Posterior cingulate gyrus (tissue), 11 donors: ENCODE measurements at regions of chr11 and their contacts with region 1.

Region 1: DNA sequence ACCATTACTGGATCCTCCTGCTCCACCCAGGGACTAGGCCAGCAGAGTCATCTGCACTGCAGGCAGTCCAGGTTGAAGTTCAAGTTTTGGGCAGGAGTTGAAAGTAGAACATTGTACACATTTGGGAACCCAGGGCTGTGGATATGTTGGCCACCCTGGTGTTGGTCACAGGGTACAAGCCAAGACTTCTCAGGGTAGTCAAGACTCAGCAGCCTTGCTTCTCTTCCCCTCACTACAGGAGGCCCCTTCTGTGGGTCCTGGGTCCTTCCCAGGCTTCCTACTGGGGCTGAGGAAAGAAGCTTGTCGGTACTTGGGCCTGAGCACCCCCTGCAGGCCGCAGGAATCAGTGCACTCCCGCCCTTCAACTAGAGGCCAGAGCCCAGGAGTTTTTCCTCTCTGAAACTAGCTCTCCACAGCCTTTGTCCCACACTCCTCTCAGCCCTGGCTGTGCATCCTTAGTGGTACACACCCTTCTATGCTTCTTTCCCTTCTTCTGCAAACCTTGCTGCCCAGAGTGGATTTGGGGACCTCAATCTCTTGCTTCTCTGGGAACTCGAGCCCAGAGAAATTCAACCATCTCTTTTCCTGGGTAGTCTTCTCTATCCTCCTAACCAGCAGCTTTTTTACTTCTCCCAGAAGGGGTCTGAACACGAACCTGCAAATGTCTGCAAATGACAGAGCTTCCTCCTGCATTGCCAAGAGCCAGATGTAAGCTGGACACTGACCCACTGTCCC is 2.6 kb upstream of the HPX start:
- DNase-seq: peak; percentile 52 to 95 (median 72)

Region 2: GRCh38 chr11:6377902-6378639 is 65.4 kb before region 1 on chr11:
- intact Hi-C with region 1: loop called (anchors 1 kb)
- DNase-seq: no peak

Region 3: DNA sequence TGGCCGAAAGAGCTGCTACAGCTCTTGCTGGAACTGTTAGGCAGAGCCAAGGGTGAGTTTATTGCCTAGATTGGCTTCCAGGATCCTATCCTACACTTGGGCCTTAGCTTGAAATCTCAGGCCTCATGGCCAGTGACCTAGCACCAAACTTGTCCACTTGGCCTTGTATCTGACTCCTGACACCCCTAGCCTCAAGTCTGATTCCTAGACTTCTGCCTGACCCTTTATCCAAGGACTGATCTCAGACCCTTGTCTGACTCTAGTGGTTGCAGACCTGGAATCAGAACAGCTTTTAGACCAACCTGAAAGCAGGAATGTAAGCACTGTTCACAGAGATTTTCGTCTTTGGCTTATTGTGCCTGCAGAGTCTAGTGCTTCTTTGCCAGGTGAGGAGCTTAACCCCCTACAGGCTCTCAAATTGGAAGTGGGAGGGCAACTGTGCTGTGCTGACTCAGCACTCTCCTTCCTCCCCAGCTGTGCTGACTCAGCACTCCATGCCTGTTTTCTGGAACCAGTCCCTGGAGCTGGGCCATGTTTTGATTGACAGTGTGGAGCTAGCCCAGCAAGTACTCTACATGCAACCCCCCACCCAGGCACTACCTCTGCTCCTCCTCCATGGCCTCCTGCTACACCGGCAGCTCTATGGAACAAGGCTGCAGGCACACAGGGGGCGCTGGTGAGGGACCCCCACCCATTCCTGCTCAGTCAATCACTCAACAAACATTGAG is 124.9 kb after region 1 on chr11:
- intact Hi-C with region 1: no loop called
- DNase-seq: peak in 5 of 10 donors; percentile 25 to 89 (median 41)